ENCODE measurements at regions of chr1 and their contacts with region 1.

Region 1: GRCh38 chr1:234842726-234843641 is 233.0 kb upstream of the IRF2BP2 start:
- DNase-seq: peak; percentile 34 to 66
- ATAC-seq: peak; percentile 22 to 82 (median 64)
- H3K4me3 ChIP-seq: no peak overlapping the region
- H3K27ac ChIP-seq: peak overlapping the region in 8 of 10 donors; percentile 20 to 85 (median 54)
- H3K4me1 ChIP-seq: peaks cover 7 to 79% (median 31%) of the 10 kb centered on the region in 9 donors
- H3K27me3 ChIP-seq: no peaks in the 10 kb centered on the region
- CTCF ChIP-seq: no peak

Region 2: DNA sequence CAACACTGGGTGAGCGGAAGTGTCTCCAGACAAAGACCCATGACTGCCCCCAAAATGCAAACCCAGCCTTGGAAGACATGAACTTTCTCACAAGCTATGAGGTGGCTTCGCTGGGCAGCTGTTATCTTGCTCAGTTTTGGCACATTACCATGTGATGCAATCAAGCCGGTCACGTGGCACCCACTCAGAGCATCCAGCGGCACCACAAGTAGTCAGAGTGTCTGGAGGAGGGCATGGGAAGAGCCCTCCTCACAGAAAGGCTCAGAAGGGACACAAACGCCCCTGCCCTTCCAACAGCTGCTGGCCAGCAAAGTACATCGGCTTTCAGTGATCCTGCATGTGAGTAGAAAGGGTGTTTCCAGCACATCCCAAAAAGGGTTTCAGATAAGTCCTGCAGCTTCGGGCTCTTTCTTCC is 87.5 kb before region 1 on chr1:
- intact Hi-C with region 1: loop called in 1 of 10 experiments (anchors 10 kb)
- DNase-seq: peak; percentile 65 to 67
- ATAC-seq: peak; percentile 50 to 90 (median 80)
- H3K4me3 ChIP-seq: peak overlapping the region in 1 of 10 donors; percentile 6
- H3K27ac ChIP-seq: no peak overlapping the region
- H3K4me1 ChIP-seq: peaks cover 3 to 33% (median 16%) of the 10 kb centered on the region in 9 donors
- H3K27me3 ChIP-seq: no peaks in the 10 kb centered on the region
- CTCF ChIP-seq: no peak

Measured in heart right ventricle (tissue), 16 donors.